ENCODE measurements at regions of chr9 and their contacts with region 1.

Region 1: DNA sequence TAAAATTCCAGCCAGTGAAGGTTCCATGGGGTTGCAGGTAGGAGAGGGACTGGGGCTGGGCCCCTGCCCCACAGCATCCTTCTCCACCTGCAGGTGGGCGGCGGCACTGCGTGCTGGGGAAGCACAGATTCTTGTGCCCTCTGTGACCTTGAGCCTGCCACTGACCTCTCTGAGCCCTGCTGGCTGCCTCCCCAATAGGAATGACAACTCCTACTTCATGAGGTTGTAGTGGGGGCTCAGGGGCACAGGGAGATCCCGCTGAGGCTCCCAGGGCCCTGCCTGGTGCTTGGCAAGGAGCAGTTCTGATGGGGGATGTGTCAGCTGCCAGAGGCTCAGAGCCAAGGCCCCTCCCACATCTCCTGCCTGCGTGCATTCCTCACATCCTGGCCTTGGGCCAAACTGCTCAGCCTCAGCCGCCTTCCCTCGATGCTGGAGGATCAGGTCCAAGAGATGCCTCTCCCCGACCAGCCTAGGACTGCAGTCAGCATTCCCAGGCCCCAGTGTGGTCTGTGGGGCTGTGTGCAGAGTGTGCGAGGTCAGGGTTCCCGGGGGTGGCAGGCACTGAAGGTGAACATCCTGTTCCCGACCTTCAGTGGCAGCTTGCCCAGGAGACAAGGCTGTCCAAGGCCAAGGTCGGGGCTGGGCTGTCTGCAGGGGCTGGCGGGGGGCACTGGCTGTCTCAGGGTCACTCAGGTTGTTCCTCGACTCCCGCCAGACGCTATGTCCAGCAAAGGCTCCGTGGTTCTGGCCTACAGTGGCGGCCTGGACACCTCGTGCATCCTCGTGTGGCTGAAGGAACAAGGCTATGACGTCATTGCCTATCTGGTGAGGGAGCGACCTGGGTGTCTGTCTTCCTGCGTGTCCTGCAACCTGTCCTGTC is 7.0 kb downstream of the ASS1 start:
- DNase-seq: peak; percentile 73 to 90
- H3K4me3 ChIP-seq: no peak overlapping the region
- H3K4me1 ChIP-seq: peaks cover 32% of the 10 kb centered on the region
- H3K27me3 ChIP-seq: no peaks in the 10 kb centered on the region

Region 2: DNA sequence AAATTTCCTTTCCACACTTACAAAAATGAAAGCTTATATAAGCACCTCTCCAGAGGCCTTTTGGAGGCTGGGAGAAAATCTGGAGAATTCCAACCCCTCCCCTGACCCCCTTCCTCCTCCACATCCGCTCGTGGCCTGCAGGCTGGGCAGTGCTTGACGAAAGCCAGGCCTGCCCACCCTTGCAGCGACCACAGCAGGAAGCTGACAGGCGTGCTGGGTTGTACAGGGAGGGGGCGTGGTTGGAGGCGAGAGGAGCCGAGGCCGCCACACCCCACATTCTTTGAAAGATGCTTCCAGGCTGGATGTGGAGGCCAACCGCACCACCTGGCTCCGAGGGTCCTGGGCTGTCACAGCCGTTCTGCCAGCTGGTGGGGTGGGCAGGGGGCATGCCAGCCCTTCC is 1225.9 kb before region 1 on chr9:
- in situ Hi-C with region 1: no loop called
- DNase-seq: peak; percentile 21 to 76
- H3K4me3 ChIP-seq: no peak overlapping the region
- H3K4me1 ChIP-seq: no peaks in the 10 kb centered on the region; the same call in 1 of the 2 replicates
- H3K27me3 ChIP-seq: no peaks in the 10 kb centered on the region

Region 3: GRCh38 chr9:130689937-130690700 is 238.4 kb after region 1 on chr9:
- in situ Hi-C with region 1: loop called (anchors 5 kb)
- DNase-seq: peak; percentile 71 to 81
- H3K4me3 ChIP-seq: peak overlapping the region; percentile 5; the same call in 1 of the 2 replicates
- H3K4me1 ChIP-seq: peaks cover 13% of the 10 kb centered on the region
- H3K27me3 ChIP-seq: no peaks in the 10 kb centered on the region

Region 4: DNA sequence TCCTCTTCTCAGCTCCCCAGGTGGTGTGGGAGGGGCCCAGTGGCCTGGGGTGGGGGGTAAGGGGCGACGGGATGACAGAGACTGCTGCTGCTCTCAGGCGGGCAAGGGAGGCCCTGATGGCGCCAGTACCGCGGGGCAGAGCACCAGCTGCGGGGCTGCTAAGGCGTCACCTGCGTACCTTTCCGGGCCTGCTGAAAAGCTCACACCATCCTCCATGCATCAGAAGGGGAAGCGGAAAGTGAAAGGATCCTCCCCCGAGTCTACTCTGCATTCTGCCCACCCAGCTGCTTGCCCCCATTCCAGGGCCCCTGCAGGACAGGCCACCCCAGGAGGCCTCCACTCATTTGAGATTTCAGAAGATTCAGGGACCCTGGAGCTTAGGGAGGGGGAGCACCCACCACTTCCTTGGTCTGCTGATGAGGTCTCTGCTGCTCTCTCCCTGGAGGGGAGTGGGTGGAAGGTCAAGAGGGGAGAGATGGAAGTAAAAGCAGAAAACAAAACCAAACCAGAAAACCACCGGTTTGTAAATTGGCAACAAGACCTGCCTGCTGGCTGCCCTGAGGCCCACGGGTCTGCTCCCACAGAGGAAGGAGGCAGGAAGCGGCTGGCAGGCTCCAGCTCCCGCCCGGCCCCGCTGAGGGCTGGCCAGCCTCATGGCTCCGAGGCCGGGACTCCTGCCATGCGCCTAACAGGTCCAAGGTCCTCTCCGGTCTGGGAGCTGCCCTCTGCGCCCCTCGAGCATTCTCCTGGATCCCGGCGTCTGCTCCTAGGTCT is 1127.2 kb after region 1 on chr9:
- in situ Hi-C with region 1: no loop called
- DNase-seq: no peak
- H3K4me3 ChIP-seq: no peak overlapping the region
- H3K4me1 ChIP-seq: no peaks in the 10 kb centered on the region
- H3K27me3 ChIP-seq: no peaks in the 10 kb centered on the region